A549 (cell line): ENCODE measurements at regions of chr20 and their contacts with region 1.

Region 1: DNA sequence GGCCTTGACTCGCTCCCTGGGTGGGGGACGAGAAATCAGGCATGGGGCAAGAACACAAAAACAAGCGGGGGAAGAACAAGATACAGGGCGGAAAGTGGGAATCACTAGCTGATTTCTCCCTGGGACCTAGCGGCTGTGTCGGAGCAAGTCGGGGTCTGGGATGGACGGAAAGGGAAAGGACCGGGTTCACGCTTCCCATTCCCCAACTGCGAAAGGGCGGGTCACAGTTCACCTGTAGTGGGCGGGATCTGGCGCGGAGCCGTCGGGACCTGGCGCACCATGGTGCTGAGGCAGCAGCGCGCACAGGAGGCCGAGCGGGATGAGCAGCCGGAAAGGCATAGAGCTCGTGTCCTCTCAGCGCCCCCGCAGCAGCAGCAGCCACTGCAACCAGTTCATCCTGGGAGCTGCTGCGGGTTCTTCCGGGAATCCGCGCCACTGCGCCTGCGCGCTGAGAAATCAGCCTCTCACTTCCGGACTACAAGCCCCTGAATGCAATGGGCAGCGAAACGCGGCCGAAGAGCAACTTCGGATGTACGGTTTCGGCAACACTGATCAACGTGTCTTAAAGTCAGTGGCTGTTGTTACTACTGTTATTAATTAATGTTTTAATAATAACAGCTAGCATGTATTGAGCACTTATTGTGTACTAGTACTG is at the start of gene EDEM2:
- DNase-seq: peak; percentile 95 to 97
- ATAC-seq: peak; percentile 95 to 96
- H3K4me3 ChIP-seq: peak within 1 kb of the TSS; percentile 78
- H3K27ac ChIP-seq: peak within 1 kb of the TSS; percentile 89
- H3K4me1 ChIP-seq: peaks cover 17% of the 10 kb centered on the region
- CTCF ChIP-seq: peak; percentile 7; the same call in 1 of the 3 replicates
- EP300 ChIP-seq: no peak
- POLR2A ChIP-seq: peak; percentile 81
- RAD21 ChIP-seq: peak in 1 of 2 experiments; percentile 35; a peak in 2 of 5 replicates
- polyA plus RNA-seq, gene EDEM2: 41.2 and 41.6 TPM in 2 replicates

Region 2: DNA sequence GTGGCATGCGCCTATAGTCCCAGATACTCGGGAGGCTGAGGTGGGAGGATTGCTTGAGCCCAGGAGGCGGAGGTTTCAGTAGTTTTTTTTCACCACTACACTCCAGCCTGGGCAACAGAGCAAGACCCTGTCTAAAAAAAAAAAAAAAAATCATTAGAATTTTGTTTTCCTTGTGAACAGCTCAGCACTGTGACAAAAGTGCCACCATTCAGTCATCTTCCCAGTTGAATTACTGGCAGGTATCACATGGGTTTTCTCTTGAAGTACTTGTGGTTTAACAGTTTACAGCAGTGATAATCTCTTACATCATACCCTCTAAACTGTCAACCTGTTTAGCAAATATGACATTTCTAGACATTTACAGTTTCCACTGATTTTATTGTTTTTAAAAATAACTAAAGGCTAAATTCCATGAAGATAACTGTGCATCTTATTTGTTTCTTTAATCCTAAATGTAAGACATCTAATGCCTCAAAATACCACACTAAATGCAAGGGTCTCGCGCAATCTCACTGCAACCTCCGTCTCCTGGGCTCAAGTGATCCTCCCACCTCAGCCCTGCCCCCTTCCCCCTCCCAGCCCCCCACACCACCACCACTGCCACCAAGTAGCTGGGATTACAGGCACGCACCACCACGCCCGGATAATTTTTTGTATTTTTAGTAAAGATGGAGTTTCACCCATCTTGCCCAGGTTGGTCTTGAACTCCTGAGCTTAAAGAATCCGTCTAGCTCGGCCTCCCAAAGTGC is 61.4 kb before region 1 on chr20:
- CTCF ChIA-PET with region 1: no interaction called
- POLR2A ChIA-PET with region 1: no interaction called
- DNase-seq: no peak
- ATAC-seq: no peak
- H3K4me3 ChIP-seq: no peak overlapping the region
- H3K27ac ChIP-seq: no peak overlapping the region
- H3K4me1 ChIP-seq: no peaks in the 10 kb centered on the region
- CTCF ChIP-seq: no peak
- EP300 ChIP-seq: no peak
- POLR2A ChIP-seq: no peak
- RAD21 ChIP-seq: no peak

Region 3: GRCh38 chr20:35166242-35166830 is 19.3 kb after region 1 on chr20:
- CTCF ChIA-PET with region 1: interaction called, 10 read pairs
- POLR2A ChIA-PET with region 1: interaction called, 3 read pairs
- DNase-seq: no peak
- ATAC-seq: peak; percentile 43 to 61; a peak in 5 of 6 replicates
- H3K4me3 ChIP-seq: no peak overlapping the region
- H3K27ac ChIP-seq: peak overlapping the region in 1 of 2 experiments; percentile 52; a peak in 2 of 6 replicates
- H3K4me1 ChIP-seq: peaks cover 5% of the 10 kb centered on the region
- CTCF ChIP-seq: no peak
- EP300 ChIP-seq: no peak
- POLR2A ChIP-seq: no peak
- RAD21 ChIP-seq: no peak

Region 4: GRCh38 chr20:35215066-35215956 is 68.3 kb after region 1 on chr20:
- CTCF ChIA-PET with region 1: interaction called, 111 read pairs
- POLR2A ChIA-PET with region 1: no interaction called
- DNase-seq: peak; percentile 74 to 88
- ATAC-seq: peak; percentile 88 to 93
- H3K4me3 ChIP-seq: no peak overlapping the region
- H3K27ac ChIP-seq: peak overlapping the region; percentile 76 to 91
- H3K4me1 ChIP-seq: peaks cover 63% of the 10 kb centered on the region
- CTCF ChIP-seq: no peak
- EP300 ChIP-seq: peak; percentile 54 to 92; a peak in 3 of 5 replicates
- POLR2A ChIP-seq: no peak
- RAD21 ChIP-seq: peak; percentile 22 to 28; a peak in 1 of 5 replicates

Region 5: DNA sequence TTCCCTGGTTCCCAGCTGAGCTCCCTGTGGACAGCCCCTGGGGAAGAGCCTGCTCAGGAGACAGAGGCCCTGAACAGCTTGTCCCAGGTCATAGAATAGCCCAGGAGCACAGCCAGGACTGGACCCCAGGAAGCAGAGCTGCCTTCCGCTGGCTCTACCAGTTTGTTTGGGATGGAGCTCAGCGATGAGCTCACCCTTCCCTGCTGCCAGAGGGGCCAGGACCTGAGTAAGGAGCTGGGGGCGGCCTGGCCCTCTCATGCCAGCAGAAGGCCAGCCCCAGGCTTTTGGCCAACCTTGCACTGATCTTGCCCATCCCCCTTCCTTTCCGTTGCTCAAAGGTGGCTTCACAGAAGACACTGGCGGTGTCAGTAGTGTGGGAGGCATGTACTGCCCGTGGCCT is 113.4 kb after region 1 on chr20:
- CTCF ChIA-PET with region 1: interaction called, 333 read pairs
- POLR2A ChIA-PET with region 1: interaction called, 9 read pairs
- DNase-seq: no peak
- ATAC-seq: no peak
- H3K4me3 ChIP-seq: no peak overlapping the region
- H3K27ac ChIP-seq: peak overlapping the region; percentile 93 to 97
- H3K4me1 ChIP-seq: peaks cover 77% of the 10 kb centered on the region
- CTCF ChIP-seq: no peak
- EP300 ChIP-seq: no peak
- POLR2A ChIP-seq: no peak
- RAD21 ChIP-seq: no peak

Region 6: DNA sequence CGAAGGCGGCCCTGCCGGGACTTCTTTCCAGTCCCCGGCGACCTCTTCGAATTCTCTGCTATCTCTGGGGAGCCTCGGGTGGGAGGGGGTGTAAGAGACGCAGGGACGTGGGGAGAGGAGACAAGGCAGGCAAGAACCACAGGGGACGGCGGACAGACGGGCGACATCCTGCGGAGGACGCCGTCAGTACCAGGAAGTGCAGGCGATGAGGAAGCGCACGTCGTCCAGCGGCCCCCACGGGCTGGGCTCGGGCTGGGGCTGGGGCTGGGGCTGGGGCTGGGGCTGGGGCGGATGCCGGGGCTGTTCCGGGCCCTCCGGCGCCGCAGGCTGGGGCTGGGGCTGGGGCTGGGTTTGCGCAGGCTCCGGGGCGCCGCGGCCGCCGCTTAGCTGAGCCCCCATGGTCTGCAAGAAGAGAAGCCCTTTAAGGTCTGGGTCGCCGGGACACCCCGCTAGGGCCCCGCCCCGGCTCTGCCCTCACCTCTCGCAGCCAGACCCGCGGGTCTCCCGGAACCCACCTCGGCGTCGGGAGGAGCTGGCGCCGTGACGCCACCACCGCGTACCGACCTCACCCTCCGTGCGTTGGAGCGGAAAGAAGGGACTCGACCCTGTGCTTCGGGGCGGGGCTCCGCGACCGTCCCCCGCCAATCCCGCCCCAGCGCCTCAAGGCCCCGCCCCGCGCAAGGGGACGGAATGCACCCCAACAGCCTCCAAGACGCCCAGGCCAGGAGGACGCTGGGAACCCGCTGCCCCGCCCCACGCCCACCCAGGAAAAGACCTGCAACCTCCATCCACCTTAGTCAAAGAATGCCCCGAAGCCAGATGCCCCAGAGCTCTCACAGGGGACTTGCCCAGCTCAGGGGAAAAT is 130.7 kb after region 1 on chr20 and contains the start of gene MMP24OS:
- CTCF ChIA-PET with region 1: interaction called, 333 read pairs
- POLR2A ChIA-PET with region 1: interaction called, 12 read pairs
- DNase-seq: peak; percentile 84 to 89
- ATAC-seq: peak; percentile 73 to 85
- H3K4me3 ChIP-seq: peak within 1 kb of the TSS; percentile 76
- H3K27ac ChIP-seq: peak within 1 kb of the TSS; percentile 98 to 99
- H3K4me1 ChIP-seq: peaks cover 31% of the 10 kb centered on the region
- CTCF ChIP-seq: no peak; the same call in 2 of the 3 replicates
- EP300 ChIP-seq: no peak
- POLR2A ChIP-seq: peak; percentile 90
- RAD21 ChIP-seq: peak in 1 of 2 experiments; percentile 21; a peak in 3 of 5 replicates
- polyA plus RNA-seq, gene MMP24OS: 13.6 and 17.2 TPM in 2 replicates